Tibial artery (tissue), 4 donors: ENCODE measurements at regions of chr10 and their contacts with region 1.

Region 1: GRCh38 chr10:79445141-79445976 is at the start of gene ZCCHC24:
- DNase-seq: peak; percentile 99 to 100
- H3K4me3 ChIP-seq: peak within 1 kb of the TSS; percentile 73 to 94
- H3K27ac ChIP-seq: peak within 1 kb of the TSS; percentile 87 to 94
- H3K4me1 ChIP-seq: peaks cover 0 to 47% (median 37%) of the 10 kb centered on the region in 4 donors
- H3K27me3 ChIP-seq: no peaks in the 10 kb centered on the region
- CTCF ChIP-seq: peak in 1 of 2 experiments; percentile 23

Region 2: GRCh38 chr10:79242620-79243152 is 202.7 kb before region 1 on chr10:
- intact Hi-C with region 1: loop called (anchors 10 kb)
- DNase-seq: peak; percentile 69 to 88
- H3K4me3 ChIP-seq: peak overlapping the region; percentile 53 to 59
- H3K27ac ChIP-seq: peak overlapping the region; percentile 96 to 97
- H3K4me1 ChIP-seq: peaks cover 11 to 87% (median 50%) of the 10 kb centered on the region in 4 donors
- H3K27me3 ChIP-seq: no peaks in the 10 kb centered on the region
- CTCF ChIP-seq: no peak

Region 3: GRCh38 chr10:79310911-79311573 is 134.3 kb before region 1 on chr10:
- intact Hi-C with region 1: no loop called
- DNase-seq: no peak
- H3K4me3 ChIP-seq: no peak overlapping the region
- H3K27ac ChIP-seq: no peak overlapping the region
- H3K4me1 ChIP-seq: no peaks in the 10 kb centered on the region
- H3K27me3 ChIP-seq: no peaks in the 10 kb centered on the region
- CTCF ChIP-seq: no peak

Region 4: GRCh38 chr10:79381804-79382221 is 63.5 kb before region 1 on chr10:
- intact Hi-C with region 1: loop called (anchors 10 kb)
- DNase-seq: peak; percentile 76 to 89
- H3K4me3 ChIP-seq: no peak overlapping the region
- H3K27ac ChIP-seq: peak overlapping the region; percentile 66 to 71
- H3K4me1 ChIP-seq: peaks cover 5 to 44% (median 38%) of the 10 kb centered on the region in 4 donors
- H3K27me3 ChIP-seq: no peaks in the 10 kb centered on the region
- CTCF ChIP-seq: no peak

Region 5: GRCh38 chr10:79400146-79401004 is 45.0 kb before region 1 on chr10:
- intact Hi-C with region 1: loop called (anchors 5 kb)
- DNase-seq: no peak
- H3K4me3 ChIP-seq: no peak overlapping the region
- H3K27ac ChIP-seq: peak overlapping the region; percentile 88 to 89
- H3K4me1 ChIP-seq: peaks cover 5 to 92% (median 78%) of the 10 kb centered on the region in 4 donors
- H3K27me3 ChIP-seq: no peaks in the 10 kb centered on the region
- CTCF ChIP-seq: peak; percentile 45 to 49

Region 6: GRCh38 chr10:79411546-79412495 is 33.5 kb before region 1 on chr10:
- intact Hi-C with region 1: no loop called
- DNase-seq: peak in 1 of 2 donors; percentile 54
- H3K4me3 ChIP-seq: no peak overlapping the region
- H3K27ac ChIP-seq: no peak overlapping the region
- H3K4me1 ChIP-seq: peaks cover 1 to 54% (median 28%) of the 10 kb centered on the region in 4 donors
- H3K27me3 ChIP-seq: no peaks in the 10 kb centered on the region
- CTCF ChIP-seq: no peak